Activated CD4-positive, alpha-beta T cell treated with anti-CD3 and anti-CD28 coated beads, Interleukin-2, amount 10 ng/mL, durations not matched to agents 24 days and 14 days (primary cell): ENCODE measurements at regions of chr15 and their contacts with region 1.

Region 1: DNA sequence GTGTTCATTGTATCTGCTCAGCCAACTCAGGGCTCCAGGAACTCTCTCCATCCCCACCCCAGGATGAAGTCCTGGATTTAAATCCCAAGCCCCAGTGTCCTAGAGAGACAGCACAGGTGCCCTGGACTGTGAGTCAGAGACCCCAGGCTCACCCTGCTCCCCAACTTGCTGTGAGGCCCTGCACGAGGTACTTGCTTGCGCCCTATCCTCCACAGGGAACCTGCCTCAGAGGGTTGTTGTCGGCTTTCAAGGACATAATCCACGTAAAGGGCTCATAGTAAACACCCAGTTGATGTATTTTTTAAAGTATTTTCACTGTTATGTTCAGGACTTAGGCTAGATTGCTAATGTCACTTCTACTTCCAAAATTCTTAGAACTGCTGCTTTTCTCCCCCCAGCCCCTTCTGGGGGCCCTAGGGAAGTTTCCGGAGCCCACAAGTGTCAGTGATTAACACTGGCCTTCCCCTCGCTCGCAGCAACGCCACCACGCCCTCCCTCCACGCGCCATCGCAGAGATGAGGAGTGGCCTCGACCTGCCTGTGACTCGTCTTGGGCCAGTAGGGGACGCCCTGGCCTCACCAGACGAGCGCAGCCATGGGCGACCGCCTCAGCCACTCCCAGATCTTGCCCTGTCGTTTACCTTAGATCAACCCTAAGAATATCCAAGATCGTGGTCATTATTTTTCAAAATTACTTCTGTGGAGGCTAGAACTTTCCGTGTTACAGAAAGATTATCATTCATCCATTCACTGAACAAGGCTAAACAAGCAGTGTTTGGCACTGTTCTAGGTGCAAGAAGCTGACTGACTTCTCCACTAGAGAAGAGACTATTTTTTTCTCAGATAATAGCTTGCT is 6.0 kb upstream of the SRP14 start:
- DNase-seq: peak; percentile 95
- H3K4me3 Mint-ChIP-seq: peak overlapping the region; percentile 64
- H3K27ac Mint-ChIP-seq: peak overlapping the region; percentile 85
- H3K4me1 Mint-ChIP-seq: peaks cover 69% of the 10 kb centered on the region
- H3K27me3 Mint-ChIP-seq: no peaks in the 10 kb centered on the region

Region 2: GRCh38 chr15:40064221-40064894 is 19.4 kb after region 1 on chr15:
- intact Hi-C with region 1: loop called (anchors 1 kb)
- DNase-seq: no peak
- H3K4me3 Mint-ChIP-seq: peak overlapping the region; percentile 45
- H3K27ac Mint-ChIP-seq: peak overlapping the region; percentile 85
- H3K4me1 Mint-ChIP-seq: peaks cover 26% of the 10 kb centered on the region
- H3K27me3 Mint-ChIP-seq: no peaks in the 10 kb centered on the region

Region 3: DNA sequence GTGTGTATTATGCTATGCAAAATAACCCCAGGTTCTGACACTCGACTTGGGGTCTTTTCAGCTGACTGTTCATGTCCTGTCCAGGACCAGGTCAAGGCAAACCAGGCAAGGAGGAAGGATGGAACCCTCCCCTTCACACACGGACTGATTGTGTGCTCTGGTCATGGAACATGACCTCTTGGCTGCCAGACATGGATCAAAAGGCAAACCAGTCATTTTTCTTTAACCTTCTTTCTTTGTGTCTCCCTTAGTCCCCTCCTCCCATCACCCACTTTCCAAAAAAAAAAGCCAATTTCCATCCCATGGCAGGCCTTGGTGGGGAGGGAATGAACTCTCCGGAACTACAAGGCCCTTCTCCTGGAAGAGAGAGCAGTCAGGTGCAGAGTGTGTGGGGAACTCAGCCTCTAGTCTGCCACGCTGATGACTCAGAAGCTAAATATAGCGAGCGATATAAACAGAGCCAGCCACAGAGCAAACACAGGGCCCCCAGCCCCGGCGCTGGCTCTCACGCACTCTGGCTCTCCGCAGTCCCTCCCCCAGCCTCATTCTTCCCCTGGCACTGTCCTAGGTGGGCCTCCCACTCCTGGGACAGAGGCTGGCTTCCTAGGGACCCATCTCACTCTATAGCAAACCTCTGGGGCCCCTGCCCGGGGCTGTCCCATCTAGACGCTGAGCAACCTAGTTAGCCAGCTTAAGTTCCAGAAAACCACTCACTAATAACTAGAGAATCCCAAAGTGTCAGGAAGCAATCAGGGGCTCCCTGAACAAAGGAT is 53.7 kb after region 1 on chr15:
- intact Hi-C with region 1: loop called (anchors 2 kb)
- DNase-seq: peak; percentile 92
- H3K4me3 Mint-ChIP-seq: peak overlapping the region; percentile 79
- H3K27ac Mint-ChIP-seq: peak overlapping the region; percentile 97
- H3K4me1 Mint-ChIP-seq: peaks cover 79% of the 10 kb centered on the region
- H3K27me3 Mint-ChIP-seq: no peaks in the 10 kb centered on the region

Region 4: GRCh38 chr15:40108855-40109735 is 64.2 kb after region 1 on chr15 and contains the start of gene BMF:
- intact Hi-C with region 1: loop called (anchors 1 kb)
- DNase-seq: peak; percentile 99
- H3K4me3 Mint-ChIP-seq: peak within 1 kb of the TSS; percentile 95
- H3K27ac Mint-ChIP-seq: peak within 1 kb of the TSS; percentile 85
- H3K4me1 Mint-ChIP-seq: peaks cover 53% of the 10 kb centered on the region
- H3K27me3 Mint-ChIP-seq: peaks cover 10% of the 10 kb centered on the region
- total RNA-seq, gene BMF: 8.4 and 9.1 TPM in 2 replicates

Region 5: DNA sequence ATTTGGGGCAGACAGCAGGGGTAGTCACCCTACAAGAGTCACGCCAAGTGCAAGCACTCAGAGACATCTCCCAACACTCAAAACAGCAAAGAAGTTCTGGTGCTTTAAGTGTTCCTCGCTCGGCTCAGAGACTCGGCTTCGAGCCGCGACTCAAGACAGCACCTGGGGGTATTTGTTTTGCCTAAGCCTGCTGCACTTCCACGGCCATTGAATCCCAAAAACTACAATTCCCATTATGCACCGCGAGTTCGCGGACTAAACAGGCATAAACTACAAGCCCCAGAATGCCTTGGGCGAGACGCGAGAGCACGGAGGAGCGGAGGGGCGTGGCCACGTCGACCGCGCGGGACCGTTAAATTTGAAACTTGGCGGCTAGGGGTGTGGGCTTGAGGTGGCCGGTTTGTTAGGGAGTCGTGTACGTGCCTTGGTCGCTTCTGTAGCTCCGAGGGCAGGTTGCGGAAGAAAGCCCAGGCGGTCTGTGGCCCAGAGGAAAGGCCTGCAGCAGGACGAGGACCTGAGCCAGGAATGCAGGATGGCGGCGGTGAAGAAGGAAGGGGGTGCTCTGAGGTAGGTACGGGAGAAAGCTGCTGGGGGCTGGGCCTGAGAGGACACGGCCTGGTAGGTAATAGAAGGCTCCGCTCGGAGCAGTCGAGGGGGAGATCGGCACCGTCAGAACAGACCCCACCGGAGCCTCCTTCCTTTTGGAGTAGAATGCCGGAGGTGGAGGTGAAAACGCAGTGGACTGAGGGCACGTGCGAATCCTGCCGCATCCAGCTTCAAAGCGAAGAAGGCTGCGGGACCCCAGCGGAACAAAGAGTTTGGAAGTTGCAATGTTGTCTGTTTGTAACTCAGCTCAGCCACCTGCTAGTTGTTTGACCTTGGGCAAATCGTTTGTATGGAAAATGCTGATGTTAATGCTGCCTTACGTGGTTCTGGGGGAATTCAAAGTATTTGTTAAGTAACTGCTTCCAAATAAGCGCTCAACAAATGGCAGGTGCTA is 116.0 kb after region 1 on chr15 and contains the start of gene BUB1B:
- intact Hi-C with region 1: loop called (anchors 1 kb)
- DNase-seq: peak; percentile 99
- H3K4me3 Mint-ChIP-seq: no peak within 1 kb of the TSS
- H3K27ac Mint-ChIP-seq: no peak within 1 kb of the TSS
- H3K4me1 Mint-ChIP-seq: peaks cover 13% of the 10 kb centered on the region
- H3K27me3 Mint-ChIP-seq: no peaks in the 10 kb centered on the region
- total RNA-seq, gene BUB1B: 69.3 and 73.1 TPM in 2 replicates

Region 6: DNA sequence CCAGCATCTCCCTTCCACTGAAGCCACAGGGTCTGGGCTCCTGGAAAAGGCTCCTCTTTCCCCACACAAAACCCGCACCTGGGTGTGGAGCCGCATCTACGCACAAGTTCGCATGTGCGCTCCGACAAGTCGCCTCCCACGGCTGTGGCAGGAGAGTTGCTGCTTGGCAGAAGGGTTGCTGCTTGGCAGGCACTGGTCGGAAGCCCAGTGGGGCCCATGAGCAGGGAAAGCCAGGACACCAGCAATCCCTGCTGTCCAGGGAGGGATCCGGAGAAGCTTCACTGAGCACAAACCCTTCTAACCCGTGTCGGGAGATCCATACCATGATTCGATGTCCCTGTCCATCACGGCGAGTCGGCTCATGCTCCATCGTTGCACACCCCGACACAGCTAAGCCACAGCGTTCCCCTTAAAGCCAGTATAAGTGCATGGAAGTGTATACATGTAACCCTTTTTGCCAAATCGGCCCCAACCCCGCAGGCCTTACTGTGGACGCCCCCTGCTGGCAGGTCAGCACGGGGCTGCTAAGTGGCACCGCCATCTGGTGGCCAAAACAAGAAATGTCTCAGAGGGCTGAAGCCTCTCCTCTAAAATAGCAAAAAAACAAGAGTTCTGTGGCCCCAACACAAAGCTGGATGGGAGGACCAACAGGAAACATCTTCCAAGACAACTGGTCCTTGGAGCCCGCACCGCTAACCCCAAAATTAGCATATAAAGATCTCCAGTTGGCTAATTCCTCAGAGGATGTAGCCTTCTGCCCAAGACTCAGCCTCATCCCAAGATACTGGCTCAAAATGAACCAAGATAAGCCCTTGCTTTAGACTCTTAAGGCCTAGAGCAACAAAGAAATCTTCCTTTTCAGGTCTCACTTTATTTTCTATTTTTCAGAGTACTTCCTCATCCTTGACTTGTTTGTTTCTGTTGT is 229.7 kb after region 1 on chr15:
- intact Hi-C with region 1: loop called (anchors 1 kb)
- DNase-seq: peak; percentile 97
- H3K4me3 Mint-ChIP-seq: no peak overlapping the region
- H3K27ac Mint-ChIP-seq: no peak overlapping the region
- H3K4me1 Mint-ChIP-seq: peaks cover 7% of the 10 kb centered on the region
- H3K27me3 Mint-ChIP-seq: peaks cover 21% of the 10 kb centered on the region

Region 7: DNA sequence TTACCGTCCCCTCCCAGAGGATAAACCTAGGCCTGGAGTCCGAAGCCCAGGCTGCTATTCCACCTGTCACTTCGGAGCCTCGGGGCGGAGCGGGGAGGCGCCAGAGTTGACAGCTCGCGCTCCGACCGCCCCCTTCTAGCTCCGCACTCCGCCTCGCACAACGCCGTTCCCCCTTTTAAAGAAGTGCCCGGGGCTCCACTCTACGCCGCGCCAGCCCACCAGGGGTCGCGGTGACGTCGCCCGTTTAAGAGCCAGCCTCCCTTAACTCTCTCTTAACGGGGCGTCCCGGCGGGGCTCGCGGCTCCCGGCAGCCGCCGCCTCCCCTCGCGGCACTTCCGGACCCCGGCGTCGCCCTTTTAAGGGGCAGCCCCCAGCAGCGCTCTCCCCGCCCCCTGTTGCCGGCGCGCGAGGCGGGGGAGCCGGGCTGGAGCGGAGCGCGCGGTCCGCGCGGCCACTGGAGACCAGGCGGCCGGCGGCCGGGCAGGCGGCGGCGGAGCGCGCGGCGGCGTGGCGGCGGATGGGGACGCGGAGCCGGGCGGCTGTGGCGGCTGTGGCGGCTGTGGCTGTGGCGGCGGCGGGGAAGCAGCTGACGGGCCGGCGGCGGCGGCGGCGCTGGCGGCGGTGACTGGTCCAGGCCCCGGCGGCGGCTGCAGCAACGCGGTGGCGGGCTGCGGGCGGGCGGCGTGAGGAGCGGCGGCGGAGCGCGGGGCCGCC is 278.5 kb after region 1 on chr15 and contains the start of gene INAFM2:
- intact Hi-C with region 1: loop called (anchors 5 kb)
- DNase-seq: peak; percentile 97
- H3K4me3 Mint-ChIP-seq: peak within 1 kb of the TSS; percentile 82
- H3K27ac Mint-ChIP-seq: no peak within 1 kb of the TSS
- H3K4me1 Mint-ChIP-seq: peaks cover 31% of the 10 kb centered on the region
- H3K27me3 Mint-ChIP-seq: peaks cover 16% of the 10 kb centered on the region
- total RNA-seq, gene INAFM2: 22.8 and 23.3 TPM in 2 replicates